ENCODE measurements at regions of chr2 and their contacts with region 1.

Region 1: DNA sequence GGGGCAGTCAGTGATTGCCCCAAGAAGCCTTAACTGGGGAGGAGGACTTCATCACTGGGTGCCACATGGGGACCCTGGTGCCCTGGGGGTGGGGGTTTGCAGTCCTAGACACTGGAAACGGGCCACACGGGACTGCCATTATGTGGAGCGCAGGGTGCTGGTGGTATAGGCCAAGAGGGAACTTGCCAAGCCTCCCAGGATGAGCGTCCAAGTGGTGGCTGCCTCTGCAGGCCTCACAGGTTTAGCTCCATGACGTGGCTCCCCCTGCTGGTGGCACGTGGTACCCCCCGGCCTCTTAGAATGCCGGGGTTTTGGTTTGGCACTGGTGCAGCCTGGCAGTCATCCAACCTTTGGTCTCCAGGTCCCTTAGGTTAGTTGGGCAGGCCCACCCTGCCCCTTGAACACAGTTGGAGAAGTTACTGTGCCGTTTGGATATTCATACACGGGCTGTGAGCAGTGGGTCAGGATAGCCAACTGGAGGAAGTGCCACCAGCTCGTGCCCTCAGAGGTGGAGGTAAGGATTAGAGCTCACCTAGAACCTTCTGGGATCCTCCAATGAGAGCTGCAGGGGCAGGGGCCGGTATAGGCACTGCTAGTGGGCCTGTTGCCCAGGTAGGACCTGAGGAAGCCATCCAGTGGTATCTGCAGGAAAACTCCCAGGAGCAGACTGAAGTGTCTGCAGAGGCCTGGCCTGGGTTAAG is 5.6 kb downstream of the PTMA start:
- DNase-seq: peak; percentile 77

Region 2: GRCh38 chr2:231573698-231574421 is 140.0 kb before region 1 on chr2:
- CTCF ChIA-PET with region 1: no interaction called
- POLR2A ChIA-PET with region 1: no interaction called
- DNase-seq: no peak

Region 3: DNA sequence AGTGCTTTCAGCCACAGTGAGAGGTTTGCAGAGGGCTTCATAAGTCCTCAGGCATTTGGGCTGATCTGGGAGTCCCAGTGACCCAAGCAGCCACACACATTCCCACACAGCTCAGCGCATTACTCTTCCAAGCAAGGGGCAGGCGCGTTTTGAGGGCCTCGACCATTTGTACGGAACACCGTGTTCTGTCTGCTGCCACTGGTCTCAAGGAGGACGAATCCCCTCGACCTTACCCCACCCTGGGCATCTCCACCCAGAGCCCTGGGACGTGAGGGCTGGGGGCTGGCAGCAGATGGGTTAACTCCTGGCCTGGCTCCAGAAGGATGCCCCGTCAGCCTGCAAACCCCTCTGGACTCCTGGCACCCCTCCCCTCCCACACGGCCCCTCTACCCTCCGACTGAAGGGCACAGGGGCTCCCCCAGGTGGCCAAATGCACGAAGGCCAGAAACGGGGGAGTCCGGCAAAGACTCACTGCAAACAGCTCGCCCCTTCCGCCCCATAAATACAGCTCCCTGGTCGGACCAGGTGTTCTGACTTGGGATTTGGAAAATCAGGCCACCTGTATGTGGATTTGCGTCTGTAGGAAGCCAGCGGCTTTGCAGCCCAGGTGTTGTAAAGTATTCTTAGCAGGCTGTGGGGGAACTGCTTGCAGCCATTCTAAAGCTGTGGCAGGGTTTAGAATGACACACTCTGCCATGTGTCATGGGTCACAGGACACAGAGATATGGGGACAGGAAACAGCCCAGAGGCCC is 39.1 kb before region 1 on chr2:
- CTCF ChIA-PET with region 1: interaction called, 136 read pairs
- POLR2A ChIA-PET with region 1: interaction called, 65 read pairs
- DNase-seq: peak; percentile 56

Region 4: GRCh38 chr2:231680287-231680991 is 33.4 kb before region 1 on chr2:
- CTCF ChIA-PET with region 1: interaction called, 136 read pairs
- POLR2A ChIA-PET with region 1: interaction called, 186 read pairs
- DNase-seq: peak; percentile 35

Region 5: DNA sequence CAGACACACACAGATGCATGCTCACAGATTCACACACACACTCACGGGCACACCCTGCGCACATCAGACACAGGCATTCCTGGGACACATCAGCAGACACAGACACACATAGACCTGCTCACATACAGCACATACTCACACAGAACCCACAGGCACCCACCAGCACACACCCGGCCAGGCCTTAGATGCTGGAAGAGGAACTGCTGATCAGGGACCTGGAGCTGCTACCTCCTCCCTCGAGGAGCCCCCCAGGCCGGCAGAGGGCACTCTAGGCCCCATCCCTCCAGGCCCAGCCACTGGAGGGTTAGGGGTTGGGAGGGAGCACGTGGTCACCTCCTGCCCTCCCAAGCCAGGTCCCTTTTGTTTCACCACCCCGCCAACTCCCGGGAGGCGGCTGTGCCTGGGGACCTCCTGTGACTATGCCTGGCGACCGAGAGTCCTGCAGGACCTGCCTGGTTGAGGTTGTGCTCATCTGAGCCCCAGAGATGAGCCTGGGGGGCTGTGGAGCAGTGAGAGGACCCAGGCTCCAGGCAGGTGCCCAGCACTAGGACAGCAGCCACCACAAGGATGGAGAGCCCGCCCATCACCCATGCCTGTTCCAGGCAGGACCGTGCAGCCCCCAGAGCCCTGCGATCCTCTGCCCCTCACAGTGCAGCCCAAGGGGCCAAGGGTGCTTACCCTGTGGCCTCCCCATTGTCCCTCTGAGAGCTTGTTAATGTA is 26.6 kb before region 1 on chr2:
- CTCF ChIA-PET with region 1: interaction called, 30 read pairs
- POLR2A ChIA-PET with region 1: interaction called, 186 read pairs
- DNase-seq: peak; percentile 73

Region 6: DNA sequence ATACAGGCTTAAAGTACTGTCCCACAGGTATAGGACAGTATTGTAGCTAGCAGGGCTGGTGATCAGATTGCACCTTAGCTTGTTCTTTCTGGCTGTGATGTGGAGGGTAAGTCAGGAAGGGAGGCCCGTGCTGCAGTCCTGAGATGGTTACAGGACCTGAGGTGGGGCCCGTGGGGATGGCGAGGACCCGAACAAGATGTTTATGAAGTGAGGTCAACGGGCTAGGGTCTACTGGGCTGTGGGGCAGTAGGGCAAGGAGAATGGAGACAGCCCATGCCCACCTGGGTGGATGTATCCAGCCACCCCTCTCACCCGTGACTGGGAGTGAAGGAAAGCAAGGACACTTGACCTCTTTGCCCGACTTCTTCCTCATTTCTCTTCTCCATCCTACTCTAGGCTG is 12.3 kb after region 1 on chr2:
- CTCF ChIA-PET with region 1: interaction called, 20 read pairs
- POLR2A ChIA-PET with region 1: interaction called, 3 read pairs
- DNase-seq: no peak